IMR-90 (cell line): ENCODE measurements at regions of chr22 and their contacts with region 1.

Region 1: DNA sequence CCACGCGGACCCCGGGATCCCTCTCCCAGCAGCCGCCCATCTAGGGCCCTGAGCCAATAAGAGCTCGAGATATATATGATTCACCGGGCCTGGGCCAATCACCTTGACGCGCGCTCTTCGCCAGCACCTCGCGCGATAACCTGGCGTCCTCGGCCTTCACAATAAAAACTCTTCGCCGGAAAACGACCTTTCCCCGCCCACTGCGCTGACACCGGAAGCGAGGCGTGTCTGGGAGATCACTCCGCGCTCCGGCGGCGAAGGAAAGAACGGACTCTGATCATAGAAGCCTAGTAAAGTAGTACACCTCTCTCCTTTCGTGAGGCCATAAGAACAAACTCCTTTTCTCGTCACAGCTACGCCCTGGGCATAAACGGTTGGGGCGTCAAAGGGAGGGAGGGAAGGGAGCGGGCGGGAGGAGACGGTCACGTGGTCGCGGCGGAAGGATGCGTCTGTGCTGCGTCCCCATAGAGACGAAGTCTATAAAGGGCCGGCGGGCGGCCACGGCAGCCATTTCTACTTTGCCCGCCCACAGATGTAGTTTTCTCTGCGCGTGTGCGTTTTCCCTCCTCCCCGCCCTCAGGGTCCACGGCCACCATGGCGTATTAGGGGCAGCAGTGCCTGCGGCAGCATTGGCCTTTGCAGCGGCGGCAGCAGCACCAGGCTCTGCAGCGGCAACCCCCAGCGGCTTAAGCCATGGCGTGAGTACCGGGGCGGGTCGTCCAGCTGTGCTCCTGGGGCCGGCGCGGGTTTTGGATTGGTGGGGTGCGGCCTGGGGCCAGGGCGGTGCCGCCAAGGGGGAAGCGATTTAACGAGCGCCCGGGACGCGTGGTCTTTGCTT is at the start of gene ATF4:
- DNase-seq: peak; percentile 99
- ATAC-seq: peak; percentile 76
- H3K4me3 ChIP-seq: peak within 1 kb of the TSS; percentile 89
- H3K27ac ChIP-seq: peak within 1 kb of the TSS; percentile 97
- H3K4me1 ChIP-seq: peaks cover 4% of the 10 kb centered on the region
- H3K27me3 ChIP-seq: no peaks in the 10 kb centered on the region
- CTCF ChIP-seq: no peak
- POLR2A ChIP-seq: peak; percentile 99
- RAD21 ChIP-seq: no peak
- total RNA-seq, gene ATF4: 136 and 148 TPM in 2 replicates

Region 2: GRCh38 chr22:39319270-39320022 is 200.8 kb before region 1 on chr22 and contains the start of gene RPL3:
- CTCF ChIA-PET with region 1: interaction called, 3 read pairs
- POLR2A ChIA-PET with region 1: no interaction called
- dilution Hi-C with region 1: no loop called
- in situ Hi-C with region 1: loop called (anchors 10 kb)
- intact Hi-C with region 1: loop called (anchors 2 kb)
- DNase-seq: peak; percentile 99
- ATAC-seq: peak; percentile 81
- H3K4me3 ChIP-seq: peak within 1 kb of the TSS; percentile 76
- H3K27ac ChIP-seq: peak within 1 kb of the TSS; percentile 85
- H3K4me1 ChIP-seq: peaks cover 16% of the 10 kb centered on the region
- H3K27me3 ChIP-seq: no peaks in the 10 kb centered on the region
- CTCF ChIP-seq: no peak
- POLR2A ChIP-seq: peak; percentile 100
- RAD21 ChIP-seq: no peak
- total RNA-seq, gene RPL3: 2,871 and 3,750 TPM in 2 replicates

Region 3: GRCh38 chr22:39405346-39406085 is 114.8 kb before region 1 on chr22:
- CTCF ChIA-PET with region 1: no interaction called
- POLR2A ChIA-PET with region 1: interaction called, 34 read pairs
- dilution Hi-C with region 1: no loop called
- in situ Hi-C with region 1: loop called (anchors 10 kb)
- intact Hi-C with region 1: loop called (anchors 10 kb)
- DNase-seq: peak; percentile 65
- ATAC-seq: peak; percentile 97
- H3K4me3 ChIP-seq: peak overlapping the region; percentile 25; the same call in 1 of the 2 replicates
- H3K27ac ChIP-seq: peak overlapping the region; percentile 46
- H3K4me1 ChIP-seq: peaks cover 10% of the 10 kb centered on the region
- H3K27me3 ChIP-seq: no peaks in the 10 kb centered on the region
- CTCF ChIP-seq: peak; percentile 33
- POLR2A ChIP-seq: no peak
- RAD21 ChIP-seq: no peak

Region 4: GRCh38 chr22:39490135-39490798 is 30.0 kb before region 1 on chr22:
- CTCF ChIA-PET with region 1: no interaction called
- POLR2A ChIA-PET with region 1: interaction called, 4 read pairs
- dilution Hi-C with region 1: no loop called
- in situ Hi-C with region 1: no loop called
- intact Hi-C with region 1: loop called (anchors 1 kb)
- DNase-seq: peak; percentile 65
- ATAC-seq: peak; percentile 79
- H3K4me3 ChIP-seq: no peak overlapping the region
- H3K27ac ChIP-seq: no peak overlapping the region
- H3K4me1 ChIP-seq: peaks cover 8% of the 10 kb centered on the region
- H3K27me3 ChIP-seq: no peaks in the 10 kb centered on the region
- CTCF ChIP-seq: no peak
- POLR2A ChIP-seq: no peak
- RAD21 ChIP-seq: no peak